ENCODE measurements at regions of chr2 and their contacts with region 1.

Region 1: GRCh38 chr2:38740851-38741731 is 10.1 kb downstream of the SRSF7 start:
- DNase-seq: no peak
- H3K4me3 ChIP-seq: peak overlapping the region in 1 of 2 donors; percentile 13
- H3K27ac ChIP-seq: peak overlapping the region; percentile 25 to 44
- H3K4me1 ChIP-seq: peaks cover 0 to 4% of the 10 kb centered on the region in 2 donors
- H3K27me3 ChIP-seq: no peaks in the 10 kb centered on the region
- CTCF ChIP-seq: peak; percentile 52 to 60 (median 57)

Region 2: GRCh38 chr2:38535744-38536506 is 205.2 kb before region 1 on chr2:
- intact Hi-C with region 1: loop called (anchors 2 kb)
- DNase-seq: peak in 1 of 2 donors; percentile 86
- H3K4me3 ChIP-seq: peak overlapping the region; percentile 52 to 66
- H3K27ac ChIP-seq: no peak overlapping the region
- H3K4me1 ChIP-seq: peaks cover 0 to 3% of the 10 kb centered on the region in 2 donors
- H3K27me3 ChIP-seq: no peaks in the 10 kb centered on the region
- CTCF ChIP-seq: peak; percentile 87 to 93 (median 91)

Region 3: DNA sequence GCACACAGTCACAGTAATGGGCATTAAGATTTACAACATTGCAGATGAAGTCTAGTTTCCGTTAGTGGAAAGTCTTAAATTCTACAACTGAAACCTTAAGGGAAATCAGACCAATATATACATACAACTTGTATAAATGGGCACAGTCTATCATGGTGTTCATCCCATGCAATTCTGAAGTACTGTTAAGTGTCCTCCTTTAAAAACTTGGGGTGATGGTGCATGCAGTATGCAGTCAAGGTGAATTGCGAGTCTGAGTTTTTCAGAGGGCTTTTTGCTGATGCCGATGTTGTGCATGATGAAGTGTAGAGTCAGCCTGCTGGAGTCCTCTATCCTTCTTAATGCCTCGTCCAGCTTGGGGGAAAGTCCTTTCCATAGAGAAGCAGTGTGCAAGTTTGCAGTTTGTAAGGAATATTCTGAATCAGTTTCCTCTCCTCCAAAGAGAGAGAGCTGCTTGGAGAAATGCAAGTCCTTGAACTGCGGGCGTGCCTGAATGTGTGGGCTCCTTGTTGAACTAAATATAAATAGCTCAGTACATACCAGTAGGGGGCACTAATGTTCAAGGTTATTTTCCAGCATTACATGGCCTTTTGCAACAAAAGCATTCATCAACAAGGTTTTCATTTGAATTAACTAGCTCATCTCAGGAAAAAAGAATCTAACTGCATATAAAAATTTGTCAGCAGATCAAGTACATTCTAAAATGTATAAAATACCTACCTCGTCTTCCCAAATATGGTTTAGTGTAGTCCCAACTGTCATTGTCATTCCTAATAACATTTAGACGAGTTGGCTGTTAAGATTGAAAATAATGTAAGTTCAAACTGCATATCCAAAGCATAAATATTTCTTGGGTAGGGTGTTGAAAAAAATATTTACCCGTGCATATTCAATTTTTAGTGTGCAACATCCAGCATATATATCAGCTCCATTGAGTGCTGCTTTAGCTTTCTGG is 159.6 kb before region 1 on chr2:
- intact Hi-C with region 1: loop called (anchors 1 kb)
- DNase-seq: no peak
- H3K4me3 ChIP-seq: no peak overlapping the region
- H3K27ac ChIP-seq: no peak overlapping the region
- H3K4me1 ChIP-seq: peaks cover 0 to 4% of the 10 kb centered on the region in 2 donors
- H3K27me3 ChIP-seq: no peaks in the 10 kb centered on the region
- CTCF ChIP-seq: peak; percentile 65 to 70 (median 68)

Region 4: GRCh38 chr2:38592951-38593350 is 148.1 kb before region 1 on chr2:
- intact Hi-C with region 1: no loop called
- DNase-seq: no peak
- H3K4me3 ChIP-seq: no peak overlapping the region
- H3K27ac ChIP-seq: no peak overlapping the region
- H3K4me1 ChIP-seq: peaks cover 0 to 30% of the 10 kb centered on the region in 2 donors
- H3K27me3 ChIP-seq: no peaks in the 10 kb centered on the region
- CTCF ChIP-seq: no peak